ENCODE measurements at regions of chr13 and their contacts with region 1.

Region 1: GRCh38 chr13:49300739-49301589 is 53.2 kb downstream of the CDADC1 start:
- DNase-seq: peak; percentile 50
- ATAC-seq: peak; percentile 69

Region 2: GRCh38 chr13:49436890-49437289 is 135.9 kb after region 1 on chr13:
- intact Hi-C with region 1: loop called (anchors 10 kb)
- DNase-seq: peak; percentile 62
- ATAC-seq: peak; percentile 84

Region 3: DNA sequence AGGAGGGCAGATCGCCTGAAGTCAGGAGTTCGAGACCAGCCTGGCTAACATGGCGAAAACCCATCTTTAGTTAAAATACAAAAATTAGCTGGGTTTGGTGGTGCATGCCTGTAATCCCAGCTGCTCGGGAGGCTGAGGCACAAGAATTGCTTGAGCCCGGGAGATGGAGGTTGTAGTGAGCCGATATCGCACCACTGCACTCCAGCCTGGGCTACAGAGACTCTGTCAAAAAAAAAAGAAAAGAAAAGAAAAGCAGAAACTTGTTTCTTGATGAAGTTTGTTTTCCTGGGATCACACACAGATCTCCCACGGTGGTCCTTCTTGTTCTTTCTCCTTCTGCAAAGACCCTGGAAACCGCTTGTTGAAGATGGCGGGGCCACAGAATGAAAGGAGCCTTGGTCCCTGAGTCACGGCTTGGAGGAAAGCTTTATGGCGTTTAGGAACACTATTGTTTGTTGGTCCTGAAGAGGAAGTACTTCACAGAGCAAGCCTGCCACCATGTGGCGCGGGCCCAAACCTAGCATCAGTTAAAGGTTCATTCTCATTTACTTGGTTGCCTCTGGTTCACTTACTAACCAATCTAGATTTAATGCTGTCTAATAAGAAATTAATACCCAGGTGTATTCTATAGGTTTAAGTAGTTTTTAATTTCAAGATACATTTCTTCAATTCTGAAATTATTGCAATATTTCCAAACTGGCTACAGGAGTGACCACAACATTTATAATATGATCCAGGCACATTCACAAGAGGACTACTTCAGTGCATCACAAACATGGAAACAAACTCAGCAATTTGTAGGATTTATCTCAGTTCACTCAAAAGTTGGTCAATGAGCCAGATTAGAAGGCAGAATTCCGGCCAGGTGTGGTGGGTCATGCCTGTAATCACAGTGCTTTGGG is 306.0 kb after region 1 on chr13:
- intact Hi-C with region 1: loop called (anchors 5 kb)
- DNase-seq: peak; percentile 91
- ATAC-seq: peak; percentile 96

Region 4: GRCh38 chr13:49858183-49858856 is 557.4 kb after region 1 on chr13:
- intact Hi-C with region 1: no loop called
- DNase-seq: no peak
- ATAC-seq: peak; percentile 53

Measured in left ventricle myocardium superior (tissue), 1 donor.